GM23248 (cell line): ENCODE measurements at regions of chr4 and their contacts with region 1.

Region 1: GRCh38 chr4:162506253-162506652 is 342.5 kb upstream of the FSTL5 start:
- DNase-seq: peak; percentile 14
- H3K4me3 ChIP-seq: no peak overlapping the region
- H3K27ac ChIP-seq: no peak overlapping the region
- H3K4me1 ChIP-seq: no peaks in the 10 kb centered on the region
- H3K27me3 ChIP-seq: no peaks in the 10 kb centered on the region

Region 2: GRCh38 chr4:162865102-162865501 is 358.8 kb after region 1 on chr4:
- in situ Hi-C with region 1: no loop called
- DNase-seq: no peak
- H3K4me3 ChIP-seq: no peak overlapping the region
- H3K27ac ChIP-seq: no peak overlapping the region
- H3K4me1 ChIP-seq: no peaks in the 10 kb centered on the region
- H3K27me3 ChIP-seq: no peaks in the 10 kb centered on the region

Region 3: DNA sequence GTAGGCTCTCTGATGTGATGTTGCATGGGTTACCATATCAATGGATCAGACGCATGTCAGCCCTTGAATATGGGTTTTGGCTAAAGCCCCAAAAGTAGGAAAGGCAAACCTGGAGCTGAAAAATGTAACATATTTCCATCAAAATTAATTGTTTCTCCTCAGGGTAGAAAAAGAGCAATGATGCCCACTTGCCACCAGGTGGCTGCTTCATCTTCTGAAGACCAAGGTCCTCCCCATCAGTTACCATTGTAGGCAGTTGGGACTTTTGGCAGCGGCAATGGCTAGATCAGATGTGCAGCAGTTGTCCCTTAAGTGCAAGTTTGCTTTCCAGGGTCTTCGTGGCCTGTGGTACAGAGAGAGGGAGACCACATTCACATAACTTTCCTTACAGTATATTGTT is 542.2 kb after region 1 on chr4:
- in situ Hi-C with region 1: loop called (anchors 25 kb)
- DNase-seq: peak; percentile 67
- H3K4me3 ChIP-seq: no peak overlapping the region
- H3K27ac ChIP-seq: no peak overlapping the region
- H3K4me1 ChIP-seq: no peaks in the 10 kb centered on the region
- H3K27me3 ChIP-seq: 0 out of 2 replicates have a peak, but pooled peaks cover 8% of the 10 kb centered on the region